Psoas muscle (tissue), 8 donors: ENCODE measurements at regions of chr7 and their contacts with region 1.

Region 1: GRCh38 chr7:23597094-23598091 is at the start of gene CCDC126:
- DNase-seq: peak; percentile 94 to 96
- ATAC-seq: peak; percentile 97 to 99 (median 99)
- H3K4me3 ChIP-seq: peak within 1 kb of the TSS; percentile 84
- H3K27ac ChIP-seq: peak within 1 kb of the TSS; percentile 97
- H3K4me1 ChIP-seq: peaks cover 19% of the 10 kb centered on the region
- H3K27me3 ChIP-seq: no peaks in the 10 kb centered on the region
- CTCF ChIP-seq: no peak
- total RNA-seq, gene CCDC126: 9.8 to 13.4 (median 12.6) TPM

Region 2: DNA sequence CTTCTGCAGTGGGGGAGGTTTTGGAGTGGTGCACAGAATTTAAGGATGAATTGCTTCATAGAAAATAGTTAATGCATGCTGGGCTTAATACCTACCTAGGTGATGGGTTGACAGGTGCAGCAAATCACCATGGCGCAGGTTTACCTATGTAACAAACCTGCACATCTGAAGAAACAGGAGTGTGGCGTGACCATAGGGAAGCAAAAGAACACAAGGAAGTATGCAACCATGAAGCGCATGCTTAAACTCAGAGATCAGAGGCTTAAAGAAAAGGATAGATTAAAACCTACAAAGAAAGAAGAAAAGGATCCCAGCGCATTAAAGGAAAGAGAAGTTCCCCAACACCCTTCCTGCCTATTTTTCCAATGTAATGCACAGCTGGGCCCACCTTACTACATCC is 21.7 kb after region 1 on chr7:
- intact Hi-C with region 1: loop called in 1 of 2 experiments (anchors 1 kb)
- DNase-seq: no peak
- ATAC-seq: no peak
- H3K4me3 ChIP-seq: no peak overlapping the region
- H3K27ac ChIP-seq: no peak overlapping the region
- H3K4me1 ChIP-seq: peaks cover 7% of the 10 kb centered on the region
- H3K27me3 ChIP-seq: no peaks in the 10 kb centered on the region
- CTCF ChIP-seq: no peak

Region 3: DNA sequence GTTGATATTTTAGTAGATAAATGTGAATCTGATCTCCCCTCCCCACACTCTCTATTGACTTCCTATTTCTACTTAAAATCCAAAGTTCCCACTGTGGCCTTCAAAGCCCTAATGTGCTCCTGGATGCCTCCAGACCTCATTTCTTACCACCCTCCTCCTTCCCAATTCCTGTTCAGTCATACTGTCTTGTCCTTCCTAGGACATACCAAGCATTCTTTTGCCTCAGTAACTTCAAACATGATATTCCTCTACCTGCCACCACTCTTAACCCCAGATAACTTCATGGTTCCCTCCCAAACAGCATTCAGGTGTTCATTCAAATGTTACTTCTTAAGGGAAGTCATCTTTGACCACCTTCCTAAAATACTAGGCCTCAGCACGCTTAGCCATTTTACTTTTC is 48.4 kb after region 1 on chr7:
- intact Hi-C with region 1: no loop called
- DNase-seq: no peak
- ATAC-seq: no peak
- H3K4me3 ChIP-seq: no peak overlapping the region
- H3K27ac ChIP-seq: no peak overlapping the region
- H3K4me1 ChIP-seq: no peaks in the 10 kb centered on the region
- H3K27me3 ChIP-seq: no peaks in the 10 kb centered on the region
- CTCF ChIP-seq: no peak

Region 4: GRCh38 chr7:23679898-23680413 is 82.6 kb after region 1 on chr7 and contains the start of gene FAM221A:
- intact Hi-C with region 1: loop called in 1 of 2 experiments (anchors 5 kb)
- DNase-seq: peak; percentile 91 to 94
- ATAC-seq: peak; percentile 99 to 100 (median 100)
- H3K4me3 ChIP-seq: peak within 1 kb of the TSS; percentile 94
- H3K27ac ChIP-seq: peak within 1 kb of the TSS; percentile 81
- H3K4me1 ChIP-seq: peaks cover 9% of the 10 kb centered on the region
- H3K27me3 ChIP-seq: no peaks in the 10 kb centered on the region
- CTCF ChIP-seq: peak; percentile 70
- total RNA-seq, gene FAM221A: 0.57 to 4.0 (median 1.7) TPM